Activated CD8-positive, alpha-beta T cell treated with anti-CD3 and anti-CD28 coated beads, Interleukin-2, amount 10 ng/mL, durations not matched to agents 7 days and 5 days (primary cell): ENCODE measurements at regions of chr2 and their contacts with region 1.

Region 1: GRCh38 chr2:117814417-117815264 is at the start of gene DDX18:
- DNase-seq: peak; percentile 98
- ATAC-seq: peak; percentile 94
- H3K4me3 Mint-ChIP-seq: peak within 1 kb of the TSS; percentile 85
- H3K27ac Mint-ChIP-seq: peak within 1 kb of the TSS; percentile 94
- H3K4me1 Mint-ChIP-seq: peaks cover 43% of the 10 kb centered on the region
- H3K27me3 Mint-ChIP-seq: no peaks in the 10 kb centered on the region
- total RNA-seq, gene DDX18: 73.0 to 77.7 TPM

Region 2: DNA sequence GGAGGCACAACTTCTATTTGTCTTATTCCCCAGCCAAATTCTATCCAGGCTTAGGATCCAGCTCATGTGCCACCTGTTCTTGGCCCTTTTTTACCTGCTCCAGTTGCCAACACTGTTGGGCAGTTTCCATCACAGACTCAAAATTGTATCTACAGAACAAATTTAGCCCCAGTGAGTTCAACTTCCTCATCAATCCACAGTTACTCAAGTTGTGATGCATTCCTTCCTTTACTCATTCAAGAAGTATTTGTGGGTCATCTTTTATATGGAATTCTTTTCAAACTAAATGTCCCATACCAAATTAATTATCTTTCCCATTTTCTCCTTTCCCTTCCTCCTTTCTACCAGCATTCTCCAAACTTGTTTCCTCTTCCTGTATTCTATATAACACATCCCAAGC is 12.8 kb before region 1 on chr2:
- CTCF ChIA-PET with region 1: interaction called, 11 read pairs
- POLR2A ChIA-PET with region 1: no interaction called
- DNase-seq: no peak
- ATAC-seq: no peak
- H3K4me3 Mint-ChIP-seq: no peak overlapping the region
- H3K27ac Mint-ChIP-seq: no peak overlapping the region
- H3K4me1 Mint-ChIP-seq: peaks cover 6% of the 10 kb centered on the region
- H3K27me3 Mint-ChIP-seq: peaks cover 18% of the 10 kb centered on the region

Region 3: DNA sequence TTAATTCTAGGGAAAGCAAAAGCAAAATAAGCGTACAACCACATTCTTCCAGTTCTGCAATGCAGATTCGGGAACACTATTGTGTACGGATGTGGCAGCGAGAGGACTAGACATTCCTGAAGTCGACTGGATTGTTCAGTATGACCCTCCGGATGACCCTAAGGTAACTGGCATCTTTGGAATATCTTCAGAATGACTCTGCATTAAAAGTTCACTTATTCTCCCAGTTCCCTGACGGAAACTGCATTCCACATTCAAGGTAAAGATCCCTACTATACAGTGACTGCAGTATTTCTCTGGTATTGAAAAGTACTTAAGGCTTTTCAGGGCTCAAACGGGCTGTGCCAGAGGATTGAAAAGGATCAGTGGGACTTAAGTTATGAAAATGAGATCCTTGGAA is 10.8 kb after region 1 on chr2:
- CTCF ChIA-PET with region 1: interaction called, 15 read pairs
- POLR2A ChIA-PET with region 1: interaction called, 4 read pairs
- DNase-seq: no peak
- ATAC-seq: no peak
- H3K4me3 Mint-ChIP-seq: no peak overlapping the region
- H3K27ac Mint-ChIP-seq: no peak overlapping the region
- H3K4me1 Mint-ChIP-seq: no peaks in the 10 kb centered on the region
- H3K27me3 Mint-ChIP-seq: no peaks in the 10 kb centered on the region

Region 4: GRCh38 chr2:117835990-117836760 is 21.5 kb after region 1 on chr2:
- CTCF ChIA-PET with region 1: interaction called, 13 read pairs
- POLR2A ChIA-PET with region 1: no interaction called
- DNase-seq: peak; percentile 56
- ATAC-seq: peak; percentile 94
- H3K4me3 Mint-ChIP-seq: peak overlapping the region; percentile 34
- H3K27ac Mint-ChIP-seq: peak overlapping the region; percentile 51
- H3K4me1 Mint-ChIP-seq: peaks cover 3% of the 10 kb centered on the region
- H3K27me3 Mint-ChIP-seq: no peaks in the 10 kb centered on the region

Region 5: GRCh38 chr2:117997872-117998454 is 183.3 kb after region 1 on chr2:
- CTCF ChIA-PET with region 1: interaction called, 107 read pairs
- POLR2A ChIA-PET with region 1: interaction called, 3 read pairs
- DNase-seq: no peak
- ATAC-seq: no peak
- H3K4me3 Mint-ChIP-seq: no peak overlapping the region
- H3K27ac Mint-ChIP-seq: no peak overlapping the region
- H3K4me1 Mint-ChIP-seq: no peaks in the 10 kb centered on the region
- H3K27me3 Mint-ChIP-seq: no peaks in the 10 kb centered on the region

Region 6: DNA sequence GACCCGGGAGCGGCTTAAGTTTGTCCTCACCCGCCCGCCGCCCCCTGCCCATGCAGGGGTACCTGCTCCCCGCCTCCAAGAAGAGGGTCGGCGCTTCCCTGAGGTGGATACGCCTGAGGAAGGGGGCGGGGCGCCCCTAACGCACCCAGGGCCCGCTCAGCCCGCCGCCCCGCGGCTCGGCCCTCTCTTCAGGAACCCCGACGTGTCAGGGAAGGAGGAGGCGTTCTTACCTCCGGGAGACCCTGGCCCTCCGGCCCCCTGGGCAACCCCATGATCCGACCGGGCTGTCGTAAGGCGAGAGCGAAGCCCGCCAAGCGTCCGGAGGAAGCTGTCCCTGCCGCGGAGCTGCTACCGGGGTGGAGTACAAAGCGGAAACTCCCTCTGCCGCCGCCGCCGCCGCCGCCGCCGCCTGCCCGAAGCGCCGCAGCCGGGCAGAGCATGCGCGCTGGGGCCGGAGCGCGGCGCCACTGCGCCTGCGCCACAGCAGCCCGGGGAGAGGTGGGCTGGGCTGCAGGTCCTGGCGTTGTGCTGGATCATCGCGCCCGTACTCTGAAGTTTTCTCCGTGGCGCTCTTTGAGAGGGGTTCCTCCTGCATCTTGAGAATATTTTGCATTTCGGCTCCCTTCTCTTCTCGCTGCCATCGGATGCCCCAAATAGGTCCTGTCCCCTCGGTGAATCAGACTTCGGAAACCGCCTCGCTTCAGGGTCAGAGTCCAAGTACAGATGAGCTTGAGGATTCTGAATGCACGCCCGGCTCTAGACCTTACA is 199.3 kb after region 1 on chr2 and contains the start of gene CCDC93:
- CTCF ChIA-PET with region 1: interaction called, 11 read pairs
- POLR2A ChIA-PET with region 1: interaction called, 3 read pairs
- DNase-seq: peak; percentile 87
- ATAC-seq: peak; percentile 90
- H3K4me3 Mint-ChIP-seq: peak within 1 kb of the TSS; percentile 88
- H3K27ac Mint-ChIP-seq: peak within 1 kb of the TSS; percentile 86
- H3K4me1 Mint-ChIP-seq: peaks cover 39% of the 10 kb centered on the region
- H3K27me3 Mint-ChIP-seq: peaks cover 5% of the 10 kb centered on the region
- total RNA-seq, gene CCDC93: 31.7 to 34.3 TPM